SK-N-SH (cell line): ENCODE measurements at regions of chr1 and their contacts with region 1.

Region 1: GRCh38 chr1:11645670-11646265 is 8.5 kb downstream of the FBXO2 start:
- DNase-seq: peak; percentile 83
- H3K4me3 ChIP-seq: no peak overlapping the region
- H3K27ac ChIP-seq: no peak overlapping the region
- H3K4me1 ChIP-seq: peaks cover 0 to 9% of the 10 kb centered on the region in 2 experiments; a peak in 1 of 4 replicates
- H3K27me3 ChIP-seq: no peaks in the 10 kb centered on the region
- CTCF ChIP-seq: peak; percentile 83
- EP300 ChIP-seq: no peak
- RAD21 ChIP-seq: peak; percentile 88

Region 2: DNA sequence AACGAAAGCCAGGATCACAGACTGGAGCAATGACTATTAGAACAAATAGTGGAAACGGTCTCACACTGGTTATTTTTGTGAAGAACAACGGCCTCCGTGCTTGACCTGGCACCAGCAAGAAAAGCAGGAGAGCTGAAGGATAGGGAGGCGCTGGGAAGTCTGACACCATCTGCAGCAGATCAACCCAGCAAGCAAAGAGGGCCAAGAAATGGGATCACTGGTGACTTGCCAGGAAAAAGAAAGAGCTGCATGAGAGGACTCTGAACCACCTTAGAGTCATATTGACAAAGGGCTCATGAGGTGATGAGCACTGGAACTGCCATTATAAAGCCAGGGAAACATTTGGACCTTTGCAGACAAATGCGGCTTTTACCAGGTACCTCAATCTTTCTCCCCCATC is 408.4 kb before region 1 on chr1:
- CTCF ChIA-PET with region 1: interaction called, 153 read pairs
- POLR2A ChIA-PET with region 1: no interaction called
- DNase-seq: no peak
- H3K4me3 ChIP-seq: no peak overlapping the region
- H3K27ac ChIP-seq: no peak overlapping the region
- H3K4me1 ChIP-seq: no peaks in the 10 kb centered on the region
- H3K27me3 ChIP-seq: no peaks in the 10 kb centered on the region
- CTCF ChIP-seq: no peak
- EP300 ChIP-seq: no peak
- RAD21 ChIP-seq: no peak

Region 3: DNA sequence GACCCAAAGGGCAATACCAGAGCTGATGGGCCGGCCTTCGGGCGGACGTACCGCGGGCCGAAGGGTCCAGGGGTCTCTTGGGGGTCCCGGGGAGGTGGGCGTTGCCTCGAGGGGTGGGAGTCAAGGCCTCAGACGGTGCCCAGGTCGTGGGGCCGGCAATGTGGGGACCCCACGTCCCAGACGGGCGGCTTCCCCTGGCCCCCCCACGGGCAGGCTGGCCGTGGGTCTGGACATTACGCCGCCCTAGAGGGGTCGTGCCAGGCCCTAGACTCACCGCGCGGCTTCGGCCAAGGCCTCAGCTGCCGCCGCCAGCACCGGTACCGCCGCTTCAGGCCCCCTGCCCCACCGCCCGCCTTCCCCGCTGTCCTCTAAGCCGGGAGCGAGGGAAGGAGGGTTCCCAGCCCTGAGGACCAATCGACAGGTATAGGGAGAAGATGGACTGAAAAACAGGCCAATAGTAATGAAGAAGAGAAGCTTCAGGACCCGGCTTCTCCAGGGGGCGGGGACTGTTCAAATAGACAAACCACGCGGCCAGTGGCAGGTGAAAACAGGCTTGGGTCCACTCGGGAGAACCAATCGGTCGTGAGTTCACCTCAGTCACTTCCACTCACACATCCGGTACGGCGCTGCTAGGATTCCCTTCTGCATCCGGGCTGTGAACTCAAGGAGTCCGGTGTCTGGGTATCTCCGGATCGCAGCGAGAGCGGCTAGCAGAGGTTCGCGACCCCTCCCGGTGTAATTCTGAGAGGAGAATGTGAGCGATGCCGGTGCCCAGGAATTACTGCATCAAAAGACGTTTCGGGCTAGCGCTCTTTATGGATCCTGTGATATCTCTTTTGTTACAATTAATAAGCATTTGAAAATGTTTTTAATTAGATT is 383.4 kb before region 1 on chr1 and contains the start of gene MTOR:
- CTCF ChIA-PET with region 1: interaction called, 14 read pairs
- POLR2A ChIA-PET with region 1: interaction called, 3 read pairs
- DNase-seq: peak; percentile 98
- H3K4me3 ChIP-seq: peak within 1 kb of the TSS; percentile 81 to 83
- H3K27ac ChIP-seq: peak within 1 kb of the TSS; percentile 65 to 85
- H3K4me1 ChIP-seq: peaks cover 0 to 2% of the 10 kb centered on the region in 2 experiments; a peak in 2 of 4 replicates
- H3K27me3 ChIP-seq: no peaks in the 10 kb centered on the region
- CTCF ChIP-seq: peak; percentile 42
- EP300 ChIP-seq: no peak; a peak in 1 of 4 replicates
- RAD21 ChIP-seq: no peak
- polyA plus RNA-seq, gene MTOR: 20.9 and 26.4 TPM in 2 replicates

Region 4: GRCh38 chr1:11320153-11320936 is 325.4 kb before region 1 on chr1:
- CTCF ChIA-PET with region 1: interaction called, 24 read pairs
- POLR2A ChIA-PET with region 1: no interaction called
- DNase-seq: peak; percentile 76
- H3K4me3 ChIP-seq: no peak overlapping the region
- H3K27ac ChIP-seq: no peak overlapping the region
- H3K4me1 ChIP-seq: peaks cover 0 to 24% of the 10 kb centered on the region in 2 experiments; a peak in 1 of 4 replicates
- H3K27me3 ChIP-seq: no peaks in the 10 kb centered on the region
- CTCF ChIP-seq: peak; percentile 62
- EP300 ChIP-seq: no peak
- RAD21 ChIP-seq: peak; percentile 54

Region 5: DNA sequence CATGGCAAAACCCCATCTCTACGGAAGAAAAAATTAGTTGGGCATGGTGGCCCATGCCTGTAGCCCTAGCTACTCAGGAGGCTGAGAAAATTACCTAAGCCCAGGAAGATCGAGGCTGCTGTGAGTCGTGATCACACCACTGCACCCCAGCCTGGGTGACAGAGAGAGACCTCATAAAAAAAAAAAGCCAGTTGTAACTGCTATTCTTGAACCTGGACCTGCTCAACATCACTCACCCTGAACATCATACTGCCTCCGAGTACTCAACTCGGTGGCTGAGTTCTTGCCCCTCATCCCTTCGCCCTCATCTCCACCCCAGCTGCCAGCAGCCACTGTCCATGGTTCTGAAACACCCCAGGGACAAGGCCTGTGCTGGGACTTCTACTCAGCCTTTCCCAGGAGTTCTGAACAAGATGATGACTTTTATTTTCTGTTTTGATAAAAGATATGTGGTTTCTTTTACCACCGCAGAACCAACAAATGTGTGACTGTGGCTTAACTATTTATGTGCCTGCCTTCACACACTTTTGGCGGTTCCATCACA is 172.2 kb before region 1 on chr1:
- CTCF ChIA-PET with region 1: interaction called, 36 read pairs
- POLR2A ChIA-PET with region 1: interaction called, 8 read pairs
- DNase-seq: no peak
- H3K4me3 ChIP-seq: no peak overlapping the region
- H3K27ac ChIP-seq: no peak overlapping the region
- H3K4me1 ChIP-seq: peaks cover 0 to 30% of the 10 kb centered on the region in 2 experiments; a peak in 1 of 4 replicates
- H3K27me3 ChIP-seq: no peaks in the 10 kb centered on the region
- CTCF ChIP-seq: no peak
- EP300 ChIP-seq: no peak
- RAD21 ChIP-seq: no peak

Region 6: GRCh38 chr1:11634365-11635192 is 11.2 kb before region 1 on chr1:
- CTCF ChIA-PET with region 1: interaction called, 34 read pairs
- POLR2A ChIA-PET with region 1: no interaction called
- DNase-seq: no peak
- H3K4me3 ChIP-seq: no peak overlapping the region
- H3K27ac ChIP-seq: no peak overlapping the region
- H3K4me1 ChIP-seq: peaks cover 0 to 12% of the 10 kb centered on the region in 2 experiments; a peak in 1 of 4 replicates
- H3K27me3 ChIP-seq: peaks cover 8% of the 10 kb centered on the region; the same call in 1 of the 2 replicates
- CTCF ChIP-seq: no peak
- EP300 ChIP-seq: no peak
- RAD21 ChIP-seq: no peak

Region 7: GRCh38 chr1:11701551-11701961 is 55.8 kb after region 1 on chr1:
- CTCF ChIA-PET with region 1: interaction called, 66 read pairs
- POLR2A ChIA-PET with region 1: no interaction called
- DNase-seq: peak; percentile 75
- H3K4me3 ChIP-seq: no peak overlapping the region
- H3K27ac ChIP-seq: no peak overlapping the region
- H3K4me1 ChIP-seq: peaks cover 0 to 9% of the 10 kb centered on the region in 2 experiments; a peak in 1 of 4 replicates
- H3K27me3 ChIP-seq: no peaks in the 10 kb centered on the region; the same call in 1 of the 2 replicates
- CTCF ChIP-seq: no peak
- EP300 ChIP-seq: no peak
- RAD21 ChIP-seq: no peak